Activated CD4-positive, alpha-beta memory T cell treated with anti-CD3 and anti-CD28 coated beads for 36 hours (primary cell): ENCODE measurements at regions of chr6 and their contacts with region 1.

Region 1: DNA sequence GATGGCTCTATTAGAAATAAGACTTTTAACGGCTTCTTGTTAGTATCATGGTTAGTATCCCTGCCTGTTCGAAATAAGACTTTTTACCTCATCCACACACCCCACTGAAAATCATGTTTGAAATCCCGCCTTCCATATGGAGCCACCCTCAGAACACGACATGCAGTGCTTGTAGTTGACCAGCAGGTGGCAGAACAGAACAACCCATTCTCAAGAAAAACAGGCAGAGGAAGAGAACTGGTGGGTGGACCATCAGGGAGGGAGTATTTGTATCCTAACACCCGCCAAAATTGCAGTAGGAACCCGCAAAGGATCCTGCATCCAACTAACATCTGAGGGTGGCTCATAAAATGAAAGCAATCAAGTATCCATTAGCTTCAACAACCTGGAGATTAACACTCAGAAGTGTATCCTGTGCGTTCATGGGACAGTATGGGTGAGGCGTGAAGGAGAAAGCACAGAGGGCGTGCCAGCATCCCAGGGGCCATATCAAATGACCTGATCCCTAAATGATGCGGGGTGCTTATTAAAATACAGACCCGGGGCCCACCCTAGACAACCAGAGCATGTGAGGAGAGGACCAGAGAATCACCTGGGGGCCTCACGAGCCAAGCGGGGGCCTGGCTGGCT is 89.6 kb upstream of the NHSL1 start:
- DNase-seq: peak; percentile 64
- H3K4me3 Mint-ChIP-seq: no peak overlapping the region
- H3K27ac Mint-ChIP-seq: no peak overlapping the region
- H3K4me1 Mint-ChIP-seq: peaks cover 21% of the 10 kb centered on the region
- H3K27me3 Mint-ChIP-seq: no peaks in the 10 kb centered on the region

Region 2: GRCh38 chr6:138115877-138116660 is 472.9 kb before region 1 on chr6:
- CTCF ChIA-PET with region 1: interaction called, 10 read pairs
- POLR2A ChIA-PET with region 1: no interaction called
- intact Hi-C with region 1: no loop called
- DNase-seq: peak; percentile 44
- H3K4me3 Mint-ChIP-seq: no peak overlapping the region
- H3K27ac Mint-ChIP-seq: no peak overlapping the region
- H3K4me1 Mint-ChIP-seq: peaks cover 6% of the 10 kb centered on the region
- H3K27me3 Mint-ChIP-seq: peaks cover 23% of the 10 kb centered on the region

Region 3: GRCh38 chr6:138428944-138429598 is 159.8 kb before region 1 on chr6:
- CTCF ChIA-PET with region 1: interaction called, 7 read pairs
- POLR2A ChIA-PET with region 1: no interaction called
- intact Hi-C with region 1: loop called (anchors 2 kb)
- DNase-seq: no peak
- H3K4me3 Mint-ChIP-seq: no peak overlapping the region
- H3K27ac Mint-ChIP-seq: no peak overlapping the region
- H3K4me1 Mint-ChIP-seq: no peaks in the 10 kb centered on the region
- H3K27me3 Mint-ChIP-seq: no peaks in the 10 kb centered on the region

Region 4: GRCh38 chr6:138692058-138692977 is 103.4 kb after region 1 on chr6:
- CTCF ChIA-PET with region 1: interaction called, 8 read pairs
- POLR2A ChIA-PET with region 1: no interaction called
- intact Hi-C with region 1: loop called (anchors 2 kb)
- DNase-seq: peak; percentile 64
- H3K4me3 Mint-ChIP-seq: peak overlapping the region; percentile 73
- H3K27ac Mint-ChIP-seq: no peak overlapping the region
- H3K4me1 Mint-ChIP-seq: peaks cover 9% of the 10 kb centered on the region
- H3K27me3 Mint-ChIP-seq: peaks cover 27% of the 10 kb centered on the region

Region 5: DNA sequence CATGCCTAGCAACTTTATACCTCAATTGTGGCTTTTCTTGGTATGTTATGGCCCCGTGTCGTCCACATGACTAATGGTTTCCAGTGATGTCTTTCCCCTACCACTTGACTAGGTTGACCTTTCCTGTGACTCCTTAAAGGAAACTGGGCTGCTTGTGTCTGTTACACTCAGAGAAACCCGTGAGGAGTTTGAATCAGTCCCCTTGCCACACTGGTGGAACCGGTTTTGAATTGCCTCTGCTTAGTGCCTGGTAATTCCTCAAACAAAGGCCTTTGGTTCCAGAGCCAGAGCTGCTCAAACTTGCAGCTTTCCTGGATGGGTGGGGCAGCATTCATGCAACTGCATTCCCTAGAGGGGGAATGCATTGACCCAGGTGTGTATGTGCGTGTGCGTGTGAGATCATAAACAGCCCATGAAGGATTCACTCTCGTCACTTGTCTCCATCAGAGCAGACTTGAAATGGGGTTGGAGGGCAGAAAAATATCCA is 228.9 kb after region 1 on chr6:
- CTCF ChIA-PET with region 1: interaction called, 5 read pairs
- POLR2A ChIA-PET with region 1: no interaction called
- intact Hi-C with region 1: loop called (anchors 2 kb)
- DNase-seq: peak; percentile 50
- H3K4me3 Mint-ChIP-seq: no peak overlapping the region
- H3K27ac Mint-ChIP-seq: peak overlapping the region; percentile 50
- H3K4me1 Mint-ChIP-seq: peaks cover 30% of the 10 kb centered on the region
- H3K27me3 Mint-ChIP-seq: peaks cover 3% of the 10 kb centered on the region

Region 6: GRCh38 chr6:139364302-139364981 is 775.5 kb after region 1 on chr6:
- CTCF ChIA-PET with region 1: interaction called, 4 read pairs
- POLR2A ChIA-PET with region 1: no interaction called
- intact Hi-C with region 1: loop called (anchors 2 kb)
- DNase-seq: no peak
- H3K4me3 Mint-ChIP-seq: no peak overlapping the region
- H3K27ac Mint-ChIP-seq: no peak overlapping the region
- H3K4me1 Mint-ChIP-seq: peaks cover 27% of the 10 kb centered on the region
- H3K27me3 Mint-ChIP-seq: no peaks in the 10 kb centered on the region